ENCODE measurements at regions of chr9 and their contacts with region 1.

Region 1: DNA sequence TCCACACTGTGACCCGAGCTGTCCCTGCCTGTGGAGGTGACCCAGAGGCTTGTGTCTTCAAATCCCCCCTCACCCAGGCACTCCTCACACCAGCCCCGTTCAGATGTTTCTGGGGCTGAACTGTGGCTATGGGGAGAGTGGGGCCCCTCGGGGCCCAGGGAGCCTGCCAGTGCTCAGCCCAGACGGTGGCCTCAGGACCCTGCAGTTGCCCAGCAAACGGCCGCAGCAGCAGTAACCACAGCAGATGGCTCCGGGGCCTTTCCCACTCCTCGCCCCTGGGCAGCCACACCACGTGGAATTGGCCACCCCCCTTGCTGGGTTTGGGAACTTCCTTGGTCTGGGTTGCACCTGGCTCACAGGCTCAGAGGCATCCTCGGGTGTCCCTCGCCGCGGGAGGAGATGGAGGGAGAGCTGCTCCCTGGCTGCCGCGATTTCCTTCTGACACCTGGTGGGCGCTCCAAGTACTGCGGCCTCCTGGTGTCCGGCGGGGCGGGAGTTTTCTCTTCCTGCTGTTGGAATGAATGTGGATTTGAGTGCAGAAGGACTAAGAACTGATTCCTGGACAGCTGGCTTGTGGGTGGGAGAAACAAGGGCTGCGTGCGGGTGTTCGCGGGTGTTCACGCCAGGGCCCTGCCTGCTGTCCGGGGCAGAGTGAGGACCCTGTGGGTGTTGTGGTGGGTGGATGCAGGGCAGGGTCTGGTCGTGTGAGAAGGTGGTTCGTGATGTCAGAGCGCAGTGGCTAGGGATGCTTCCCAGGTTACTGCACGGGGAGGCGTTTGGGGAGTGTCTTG is 97.5 kb downstream of the COL5A1 start:
- DNase-seq: peak; percentile 49
- ATAC-seq: peak; percentile 75
- H3K4me3 ChIP-seq: no peak overlapping the region
- H3K27ac ChIP-seq: no peak overlapping the region
- H3K4me1 ChIP-seq: peaks cover 9% of the 10 kb centered on the region
- H3K27me3 ChIP-seq: no peaks in the 10 kb centered on the region
- CTCF ChIP-seq: peak; percentile 73
- POLR2A ChIP-seq: no peak
- RAD21 ChIP-seq: peak; percentile 74

Region 2: DNA sequence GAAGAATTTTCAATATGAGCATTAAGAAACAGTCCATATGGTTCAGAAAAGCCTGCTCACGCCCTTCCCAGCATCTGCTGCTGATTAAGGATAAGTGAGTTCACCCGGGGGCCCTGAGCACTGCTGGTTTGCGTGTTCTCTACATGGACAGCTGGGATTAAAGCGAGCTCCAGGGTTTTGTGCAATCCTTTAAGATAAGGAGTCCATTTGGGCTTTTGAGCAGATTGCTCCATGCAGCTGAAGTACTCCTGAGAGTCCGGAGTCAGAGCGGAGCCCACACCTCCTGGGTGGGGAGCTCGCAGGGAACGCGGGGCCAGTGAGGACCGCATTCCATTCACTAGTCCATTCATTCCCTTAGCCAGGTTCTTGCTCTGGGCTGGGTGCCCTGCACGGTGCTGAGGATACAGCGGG is 246.8 kb before region 1 on chr9:
- CTCF ChIA-PET with region 1: no interaction called
- POLR2A ChIA-PET with region 1: no interaction called
- dilution Hi-C with region 1: no loop called
- in situ Hi-C with region 1: no loop called
- intact Hi-C with region 1: no loop called
- DNase-seq: peak; percentile 91
- ATAC-seq: peak; percentile 88
- H3K4me3 ChIP-seq: no peak overlapping the region
- H3K27ac ChIP-seq: peak overlapping the region; percentile 41; the same call in 1 of the 2 replicates
- H3K4me1 ChIP-seq: peaks cover 22% of the 10 kb centered on the region
- H3K27me3 ChIP-seq: peaks cover 5% of the 10 kb centered on the region
- CTCF ChIP-seq: no peak
- POLR2A ChIP-seq: no peak
- RAD21 ChIP-seq: no peak; the same call in 1 of the 2 replicates

Region 3: GRCh38 chr9:134707031-134707680 is 31.9 kb before region 1 on chr9:
- CTCF ChIA-PET with region 1: no interaction called
- POLR2A ChIA-PET with region 1: no interaction called
- dilution Hi-C with region 1: no loop called
- in situ Hi-C with region 1: no loop called
- intact Hi-C with region 1: loop called (anchors 2 kb)
- DNase-seq: peak; percentile 88
- ATAC-seq: peak; percentile 88
- H3K4me3 ChIP-seq: no peak overlapping the region
- H3K27ac ChIP-seq: peak overlapping the region; percentile 28
- H3K4me1 ChIP-seq: peaks cover 24% of the 10 kb centered on the region
- H3K27me3 ChIP-seq: no peaks in the 10 kb centered on the region
- CTCF ChIP-seq: no peak
- POLR2A ChIP-seq: no peak
- RAD21 ChIP-seq: no peak

Measured in IMR-90 (cell line).